Activated CD8-positive, alpha-beta T cell treated with anti-CD3 and anti-CD28 coated beads for 36 hours (primary cell): ENCODE measurements at regions of chr20 and their contacts with region 1.

Region 1: DNA sequence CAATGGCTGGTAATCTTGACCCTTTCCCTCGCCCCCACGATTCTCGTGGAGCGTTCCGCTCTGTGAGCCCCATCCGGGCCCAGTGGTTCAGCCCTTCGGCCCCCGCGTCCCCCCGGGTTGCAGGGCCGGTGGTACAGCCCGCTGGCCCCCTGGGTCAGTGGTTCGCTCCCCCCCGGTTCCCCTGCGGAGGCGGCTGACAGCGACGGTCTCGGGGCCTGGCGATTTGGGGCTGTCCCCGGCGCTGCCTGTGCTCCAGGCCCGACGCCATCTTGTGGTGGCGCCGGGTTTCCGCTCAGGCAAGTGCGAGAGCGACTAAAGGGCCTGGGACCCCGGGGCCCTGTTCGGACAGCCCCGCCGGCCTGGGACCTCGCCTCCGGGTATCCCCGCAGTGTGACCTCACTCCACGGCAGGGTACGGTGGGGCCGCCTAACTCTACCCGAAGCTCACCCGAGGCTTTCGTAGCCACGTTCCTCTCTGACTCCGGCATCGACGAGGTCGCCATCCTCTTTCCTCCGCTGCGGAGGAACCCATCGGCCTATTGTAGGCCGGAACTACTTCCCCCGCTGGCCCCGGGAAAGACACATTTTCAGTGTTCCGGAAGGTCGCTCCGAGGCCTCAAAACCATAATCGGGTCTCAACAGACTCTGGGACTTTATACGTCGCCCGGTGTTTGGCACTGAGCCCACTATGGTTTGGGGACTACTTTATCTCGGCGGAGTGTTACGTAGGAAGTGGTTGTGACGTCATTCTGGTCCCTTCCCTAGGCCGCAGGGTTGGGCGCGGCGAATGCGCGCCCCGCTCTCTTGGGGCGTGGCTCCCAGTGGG is at the start of gene ZNF335:
- DNase-seq: peak; percentile 95
- ATAC-seq: peak; percentile 86
- H3K4me3 Mint-ChIP-seq: peak within 1 kb of the TSS; percentile 84
- H3K27ac Mint-ChIP-seq: peak within 1 kb of the TSS; percentile 100
- H3K4me1 Mint-ChIP-seq: peaks cover 16% of the 10 kb centered on the region
- H3K27me3 Mint-ChIP-seq: no peaks in the 10 kb centered on the region
- CTCF ChIP-seq: no peak
- total RNA-seq, gene ZNF335: 27.0 to 28.8 TPM

Region 2: GRCh38 chr20:45779011-45779915 is 192.6 kb before region 1 on chr20:
- CTCF ChIA-PET with region 1: no interaction called
- POLR2A ChIA-PET with region 1: no interaction called
- intact Hi-C with region 1: no loop called
- DNase-seq: peak; percentile 23
- ATAC-seq: peak; percentile 34
- H3K4me3 Mint-ChIP-seq: no peak overlapping the region
- H3K27ac Mint-ChIP-seq: no peak overlapping the region
- H3K4me1 Mint-ChIP-seq: peaks cover 6% of the 10 kb centered on the region
- H3K27me3 Mint-ChIP-seq: peaks cover 4% of the 10 kb centered on the region
- CTCF ChIP-seq: no peak

Region 3: GRCh38 chr20:45798935-45799642 is 172.8 kb before region 1 on chr20:
- CTCF ChIA-PET with region 1: interaction called, 31 read pairs
- POLR2A ChIA-PET with region 1: interaction called, 7 read pairs
- intact Hi-C with region 1: no loop called
- DNase-seq: peak; percentile 83
- ATAC-seq: peak; percentile 99
- H3K4me3 Mint-ChIP-seq: no peak overlapping the region
- H3K27ac Mint-ChIP-seq: peak overlapping the region; percentile 22
- H3K4me1 Mint-ChIP-seq: peaks cover 6% of the 10 kb centered on the region
- H3K27me3 Mint-ChIP-seq: no peaks in the 10 kb centered on the region
- CTCF ChIP-seq: peak; percentile 79

Region 4: GRCh38 chr20:45857114-45857881 is 114.6 kb before region 1 on chr20 and contains the starts of genes ACOT8 and ZSWIM3:
- CTCF ChIA-PET with region 1: interaction called, 15 read pairs
- POLR2A ChIA-PET with region 1: interaction called, 3 read pairs
- intact Hi-C with region 1: no loop called
- DNase-seq: peak; percentile 98
- ATAC-seq: peak; percentile 96
- H3K4me3 Mint-ChIP-seq: peak within 1 kb of the TSS; percentile 97
- H3K27ac Mint-ChIP-seq: peak within 1 kb of the TSS; percentile 99
- H3K4me1 Mint-ChIP-seq: peaks cover 42% of the 10 kb centered on the region
- H3K27me3 Mint-ChIP-seq: no peaks in the 10 kb centered on the region
- CTCF ChIP-seq: no peak
- total RNA-seq, gene ACOT8: 18.5 to 21.2 TPM
- total RNA-seq, gene ZSWIM3: 3.5 to 3.6 TPM

Region 5: DNA sequence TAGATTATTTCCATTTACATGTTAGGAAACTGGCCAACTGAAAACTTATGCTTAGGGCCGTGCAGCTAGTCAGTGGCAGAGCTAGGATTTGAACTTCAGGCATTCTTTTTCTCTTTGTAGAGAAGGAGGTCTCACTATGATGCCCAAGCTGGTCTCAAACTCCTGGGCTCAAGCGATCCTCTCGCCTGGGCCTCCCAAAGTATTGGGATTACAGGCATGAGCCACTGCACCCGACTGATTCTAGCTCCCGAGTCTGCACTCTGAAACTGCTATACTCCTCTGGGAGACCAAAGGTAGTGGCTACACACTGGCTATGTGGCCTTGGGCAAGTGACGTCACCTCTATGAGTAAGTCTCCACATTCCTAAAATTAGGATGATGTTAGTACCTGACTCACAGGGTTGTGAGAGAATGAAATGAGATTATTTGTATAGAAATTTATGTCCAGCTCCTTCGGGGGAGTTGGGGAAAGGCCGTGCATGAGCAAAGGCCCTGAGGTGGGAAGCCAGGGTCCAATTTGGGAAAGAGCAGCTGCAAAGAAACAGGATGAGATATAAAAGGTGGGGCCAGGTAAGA is 66.3 kb before region 1 on chr20:
- CTCF ChIA-PET with region 1: interaction called, 11 read pairs
- POLR2A ChIA-PET with region 1: interaction called, 7 read pairs
- intact Hi-C with region 1: no loop called
- DNase-seq: no peak
- ATAC-seq: no peak
- H3K4me3 Mint-ChIP-seq: no peak overlapping the region
- H3K27ac Mint-ChIP-seq: no peak overlapping the region
- H3K4me1 Mint-ChIP-seq: peaks cover 2% of the 10 kb centered on the region
- H3K27me3 Mint-ChIP-seq: no peaks in the 10 kb centered on the region
- CTCF ChIP-seq: no peak

Region 6: GRCh38 chr20:45957081-45957941 is 14.6 kb before region 1 on chr20:
- CTCF ChIA-PET with region 1: interaction called, 50 read pairs
- POLR2A ChIA-PET with region 1: interaction called, 55 read pairs
- intact Hi-C with region 1: no loop called
- DNase-seq: no peak
- ATAC-seq: no peak
- H3K4me3 Mint-ChIP-seq: no peak overlapping the region
- H3K27ac Mint-ChIP-seq: no peak overlapping the region
- H3K4me1 Mint-ChIP-seq: no peaks in the 10 kb centered on the region
- H3K27me3 Mint-ChIP-seq: no peaks in the 10 kb centered on the region
- CTCF ChIP-seq: no peak

Region 7: GRCh38 chr20:46013826-46014516 is 42.1 kb after region 1 on chr20:
- CTCF ChIA-PET with region 1: interaction called, 51 read pairs
- POLR2A ChIA-PET with region 1: no interaction called
- intact Hi-C with region 1: no loop called
- DNase-seq: peak; percentile 83
- ATAC-seq: peak; percentile 86
- H3K4me3 Mint-ChIP-seq: peak overlapping the region; percentile 44
- H3K27ac Mint-ChIP-seq: no peak overlapping the region
- H3K4me1 Mint-ChIP-seq: peaks cover 42% of the 10 kb centered on the region
- H3K27me3 Mint-ChIP-seq: peaks cover 62% of the 10 kb centered on the region
- CTCF ChIP-seq: peak; percentile 99